Mammary epithelial cell (primary cell): ENCODE measurements at regions of chr19 and their contacts with region 1.

Region 1: DNA sequence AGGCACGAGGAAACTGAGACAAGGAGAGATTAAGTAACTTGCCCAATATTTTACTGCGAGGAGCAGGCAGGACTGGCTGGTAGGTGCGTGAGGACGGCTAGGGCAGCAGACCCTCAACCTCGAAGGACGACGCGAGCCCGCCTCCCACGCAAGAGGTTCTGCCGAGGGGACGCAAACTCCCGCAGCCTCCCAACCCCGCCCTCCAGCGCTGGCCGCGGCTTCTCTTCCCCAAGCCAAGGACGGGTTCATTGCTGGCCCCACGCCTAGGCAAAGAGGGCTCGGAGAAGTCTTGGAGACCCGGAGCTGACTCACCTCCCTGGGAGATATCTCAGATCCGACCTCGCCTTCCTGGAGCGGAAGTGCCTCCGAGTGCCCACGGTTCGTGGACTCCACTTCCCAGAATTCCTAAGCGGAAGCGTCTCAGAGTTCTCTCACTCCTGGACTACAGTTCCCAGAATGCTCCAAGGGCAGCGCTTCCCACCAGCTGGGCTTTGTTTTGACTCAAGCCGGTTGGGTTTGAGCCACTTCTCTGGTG is at the start of gene ZNF235:
- DNase-seq: peak; percentile 97
- H3K4me3 ChIP-seq: peak within 1 kb of the TSS; percentile 77 to 86 (median 79)
- H3K27ac ChIP-seq: peak within 1 kb of the TSS; percentile 63
- H3K4me1 ChIP-seq: peaks cover 6% of the 10 kb centered on the region
- H3K27me3 ChIP-seq: no peaks in the 10 kb centered on the region
- CTCF ChIP-seq: no peak
- total RNA-seq, gene ZNF235: 6.9 to 7.8 TPM

Region 2: GRCh38 chr19:44212250-44212865 is 92.4 kb before region 1 on chr19 and contains the start of gene ZNF227:
- CTCF ChIA-PET with region 1: no interaction called
- dilution Hi-C with region 1: no loop called
- in situ Hi-C with region 1: no loop called
- intact Hi-C with region 1: loop called (anchors 2 kb)
- DNase-seq: peak; percentile 96
- H3K4me3 ChIP-seq: peak within 1 kb of the TSS; percentile 72 to 95 (median 95)
- H3K27ac ChIP-seq: peak within 1 kb of the TSS; percentile 57
- H3K4me1 ChIP-seq: no peaks in the 10 kb centered on the region
- H3K27me3 ChIP-seq: no peaks in the 10 kb centered on the region
- CTCF ChIP-seq: no peak
- total RNA-seq, gene ZNF227: 11.1 to 12.8 TPM

Region 3: DNA sequence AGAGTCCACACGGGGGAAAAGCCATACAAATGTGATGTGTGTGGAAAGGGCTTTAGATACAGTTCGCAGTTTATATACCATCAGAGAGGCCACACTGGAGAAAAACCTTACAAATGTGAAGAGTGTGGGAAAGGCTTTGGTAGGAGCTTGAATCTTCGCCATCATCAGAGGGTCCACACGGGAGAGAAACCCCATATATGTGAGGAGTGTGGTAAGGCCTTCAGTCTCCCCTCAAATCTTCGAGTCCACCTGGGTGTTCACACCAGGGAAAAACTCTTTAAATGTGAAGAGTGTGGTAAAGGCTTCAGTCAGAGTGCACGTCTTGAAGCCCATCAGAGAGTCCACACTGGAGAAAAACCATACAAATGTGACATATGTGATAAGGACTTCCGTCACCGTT is 68.3 kb before region 1 on chr19:
- CTCF ChIA-PET with region 1: no interaction called
- dilution Hi-C with region 1: no loop called
- in situ Hi-C with region 1: no loop called
- intact Hi-C with region 1: no loop called
- DNase-seq: no peak
- H3K4me3 ChIP-seq: no peak overlapping the region
- H3K27ac ChIP-seq: no peak overlapping the region
- H3K4me1 ChIP-seq: no peaks in the 10 kb centered on the region
- H3K27me3 ChIP-seq: no peaks in the 10 kb centered on the region
- CTCF ChIP-seq: no peak

Region 4: GRCh38 chr19:44356383-44357111 is 51.8 kb after region 1 on chr19 and contains the start of gene ZNF112:
- CTCF ChIA-PET with region 1: no interaction called
- dilution Hi-C with region 1: no loop called
- in situ Hi-C with region 1: no loop called
- intact Hi-C with region 1: loop called (anchors 1 kb)
- DNase-seq: peak; percentile 97
- H3K4me3 ChIP-seq: peak within 1 kb of the TSS; percentile 66 to 86 (median 69)
- H3K27ac ChIP-seq: peak within 1 kb of the TSS; percentile 37
- H3K4me1 ChIP-seq: peaks cover 2% of the 10 kb centered on the region
- H3K27me3 ChIP-seq: no peaks in the 10 kb centered on the region
- CTCF ChIP-seq: no peak
- total RNA-seq, gene ZNF112: 4.7 to 6.5 TPM

Region 5: GRCh38 chr19:44401139-44402115 is 96.7 kb after region 1 on chr19 and contains the start of gene ZNF285:
- CTCF ChIA-PET with region 1: no interaction called
- dilution Hi-C with region 1: loop called (anchors 5 kb)
- in situ Hi-C with region 1: no loop called
- intact Hi-C with region 1: no loop called
- DNase-seq: peak; percentile 95
- H3K4me3 ChIP-seq: peak within 1 kb of the TSS; percentile 61 to 82 (median 69)
- H3K27ac ChIP-seq: no peak within 1 kb of the TSS
- H3K4me1 ChIP-seq: no peaks in the 10 kb centered on the region
- H3K27me3 ChIP-seq: no peaks in the 10 kb centered on the region
- CTCF ChIP-seq: no peak
- total RNA-seq, gene ZNF285: 2.7 to 2.8 TPM